RWPE1 (cell line): ENCODE measurements at regions of chr2 and their contacts with region 1.

Region 1: GRCh38 chr2:41869542-41870264 is 178.1 kb upstream of the PKDCC start:
- DNase-seq: peak; percentile 68
- H3K27ac ChIP-seq: no peak overlapping the region
- CTCF ChIP-seq: peak; percentile 53

Region 2: GRCh38 chr2:42092084-42092996 is 222.6 kb after region 1 on chr2:
- CTCF ChIA-PET with region 1: interaction called, 102 read pairs
- POLR2A ChIA-PET with region 1: no interaction called
- DNase-seq: no peak
- H3K27ac ChIP-seq: no peak overlapping the region
- CTCF ChIP-seq: no peak